WTC11 (cell line): ENCODE measurements at regions of chr19 and their contacts with region 1.

Region 1: DNA sequence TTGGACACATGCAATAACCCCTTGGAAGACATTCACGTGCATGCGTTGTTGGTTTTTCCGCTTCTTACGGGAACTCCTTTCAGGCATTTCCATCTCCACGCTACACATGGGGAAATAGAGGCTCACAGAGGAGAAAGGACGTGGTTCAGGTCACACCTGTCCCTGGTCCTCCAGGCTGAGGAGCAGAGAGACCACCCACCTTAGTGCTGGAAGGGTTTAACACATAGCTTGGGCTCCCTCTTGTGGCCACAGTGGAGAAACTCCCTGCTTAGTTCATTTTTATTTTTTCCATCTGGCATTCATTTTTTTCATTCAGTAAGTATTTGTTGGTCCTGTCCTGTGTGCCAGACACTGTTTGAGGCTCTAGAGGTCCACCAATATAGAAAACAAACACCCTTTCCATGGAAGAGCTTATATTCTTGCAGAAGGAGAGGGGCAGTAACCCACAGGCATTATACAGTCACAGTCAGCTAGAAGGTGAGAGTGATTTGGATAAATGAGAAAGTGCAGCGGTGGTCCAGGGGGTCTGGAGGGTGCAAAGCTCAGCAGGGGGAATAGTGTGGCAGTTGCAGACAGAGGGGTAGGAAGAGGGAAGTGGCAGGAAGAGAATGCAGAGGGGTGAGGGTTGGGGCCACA is 24.2 kb upstream of the TTYH1 start:
- DNase-seq: peak; percentile 77
- ATAC-seq: peak; percentile 67
- H3K4me3 Mint-ChIP-seq: no peak overlapping the region
- H3K27ac Mint-ChIP-seq: peak overlapping the region; percentile 21; the same call in 1 of the 2 replicates
- H3K4me1 Mint-ChIP-seq: peaks cover 26% of the 10 kb centered on the region
- H3K27me3 Mint-ChIP-seq: peaks cover 43% of the 10 kb centered on the region
- CTCF ChIP-seq: peak; percentile 73

Region 2: DNA sequence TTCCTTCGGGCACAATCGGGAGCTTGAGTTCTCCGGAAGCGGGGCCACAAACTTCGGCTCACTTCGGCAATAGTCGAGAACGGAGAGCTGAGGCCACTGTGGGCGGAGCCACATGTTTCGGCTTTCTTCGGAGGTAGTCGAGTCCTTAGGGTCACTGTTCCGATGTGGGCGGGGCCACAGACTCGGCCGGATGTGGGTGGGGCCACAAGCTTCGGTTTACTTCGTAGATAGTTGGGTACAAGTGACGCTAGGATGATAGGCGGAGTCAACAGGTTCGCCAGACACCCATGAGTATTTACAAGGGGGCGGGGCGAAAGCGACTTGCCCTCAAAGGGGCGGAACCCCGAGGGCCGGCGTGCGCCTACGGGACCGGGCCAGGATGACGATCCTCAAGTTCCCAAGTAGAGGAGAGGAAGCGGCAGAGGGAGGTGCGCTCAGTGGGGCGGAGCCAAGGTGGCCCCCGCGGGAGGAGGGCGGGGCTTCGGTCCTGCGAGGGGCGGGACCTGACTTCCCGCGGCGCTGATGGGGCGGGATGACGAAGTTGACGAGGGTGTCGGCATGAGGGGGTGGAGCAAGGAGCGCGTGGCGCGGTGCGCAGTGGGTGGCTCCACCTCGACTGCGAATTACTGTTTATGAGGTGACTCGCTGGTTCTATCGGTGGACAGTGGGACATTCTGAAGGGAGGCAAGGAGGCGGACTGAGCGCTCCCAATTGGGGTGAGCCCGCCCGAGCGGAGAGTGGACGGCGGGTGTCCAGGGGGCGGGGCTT is 201.1 kb before region 1 on chr19:
- CTCF ChIA-PET with region 1: interaction called, 12 read pairs
- POLR2A ChIA-PET with region 1: no interaction called
- DNase-seq: peak; percentile 100
- ATAC-seq: peak; percentile 71
- H3K4me3 Mint-ChIP-seq: peak overlapping the region; percentile 85
- H3K27ac Mint-ChIP-seq: peak overlapping the region; percentile 100
- H3K4me1 Mint-ChIP-seq: peaks cover 35% of the 10 kb centered on the region
- H3K27me3 Mint-ChIP-seq: peaks cover 3% of the 10 kb centered on the region; the same call in 1 of the 2 replicates
- CTCF ChIP-seq: no peak

Region 3: DNA sequence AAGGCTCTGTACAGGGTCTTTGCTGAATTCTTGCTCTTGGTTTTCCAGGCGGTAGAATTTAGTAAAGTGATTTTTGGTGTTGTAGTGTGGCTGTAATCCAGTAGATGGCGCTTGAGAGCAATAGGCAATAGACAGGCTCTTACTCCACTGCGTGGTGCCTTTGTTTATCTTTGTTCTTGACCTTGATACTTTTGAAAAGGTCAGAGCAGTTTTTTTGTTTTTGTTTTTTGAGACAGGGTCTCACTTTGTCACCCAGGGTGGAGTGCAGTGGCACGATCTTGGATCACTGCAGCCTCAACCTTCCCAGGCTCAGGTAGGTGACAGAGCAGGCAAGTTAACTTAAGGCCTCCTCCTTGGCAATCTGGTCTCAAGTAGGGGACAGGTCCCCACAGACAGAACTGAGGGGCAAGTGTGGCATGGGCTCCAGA is 65.9 kb before region 1 on chr19:
- CTCF ChIA-PET with region 1: interaction called, 29 read pairs
- POLR2A ChIA-PET with region 1: no interaction called
- DNase-seq: peak; percentile 46
- ATAC-seq: peak; percentile 72
- H3K4me3 Mint-ChIP-seq: no peak overlapping the region
- H3K27ac Mint-ChIP-seq: no peak overlapping the region; the same call in 1 of the 2 replicates
- H3K4me1 Mint-ChIP-seq: peaks cover 24% of the 10 kb centered on the region
- H3K27me3 Mint-ChIP-seq: peaks cover 54% of the 10 kb centered on the region
- CTCF ChIP-seq: peak; percentile 75

Region 4: GRCh38 chr19:54418030-54418929 is 27.2 kb after region 1 on chr19:
- CTCF ChIA-PET with region 1: interaction called, 66 read pairs
- POLR2A ChIA-PET with region 1: interaction called, 4 read pairs
- DNase-seq: no peak
- ATAC-seq: no peak
- H3K4me3 Mint-ChIP-seq: peak overlapping the region; percentile 51
- H3K27ac Mint-ChIP-seq: peak overlapping the region; percentile 43
- H3K4me1 Mint-ChIP-seq: peaks cover 45% of the 10 kb centered on the region
- H3K27me3 Mint-ChIP-seq: peaks cover 33% of the 10 kb centered on the region
- CTCF ChIP-seq: no peak

Region 5: GRCh38 chr19:54439174-54439853 is 48.3 kb after region 1 on chr19:
- CTCF ChIA-PET with region 1: interaction called, 53 read pairs
- POLR2A ChIA-PET with region 1: no interaction called
- DNase-seq: peak; percentile 79
- ATAC-seq: peak; percentile 85
- H3K4me3 Mint-ChIP-seq: no peak overlapping the region
- H3K27ac Mint-ChIP-seq: peak overlapping the region; percentile 49; the same call in 1 of the 2 replicates
- H3K4me1 Mint-ChIP-seq: peaks cover 27% of the 10 kb centered on the region
- H3K27me3 Mint-ChIP-seq: peaks cover 7% of the 10 kb centered on the region
- CTCF ChIP-seq: no peak

Region 6: DNA sequence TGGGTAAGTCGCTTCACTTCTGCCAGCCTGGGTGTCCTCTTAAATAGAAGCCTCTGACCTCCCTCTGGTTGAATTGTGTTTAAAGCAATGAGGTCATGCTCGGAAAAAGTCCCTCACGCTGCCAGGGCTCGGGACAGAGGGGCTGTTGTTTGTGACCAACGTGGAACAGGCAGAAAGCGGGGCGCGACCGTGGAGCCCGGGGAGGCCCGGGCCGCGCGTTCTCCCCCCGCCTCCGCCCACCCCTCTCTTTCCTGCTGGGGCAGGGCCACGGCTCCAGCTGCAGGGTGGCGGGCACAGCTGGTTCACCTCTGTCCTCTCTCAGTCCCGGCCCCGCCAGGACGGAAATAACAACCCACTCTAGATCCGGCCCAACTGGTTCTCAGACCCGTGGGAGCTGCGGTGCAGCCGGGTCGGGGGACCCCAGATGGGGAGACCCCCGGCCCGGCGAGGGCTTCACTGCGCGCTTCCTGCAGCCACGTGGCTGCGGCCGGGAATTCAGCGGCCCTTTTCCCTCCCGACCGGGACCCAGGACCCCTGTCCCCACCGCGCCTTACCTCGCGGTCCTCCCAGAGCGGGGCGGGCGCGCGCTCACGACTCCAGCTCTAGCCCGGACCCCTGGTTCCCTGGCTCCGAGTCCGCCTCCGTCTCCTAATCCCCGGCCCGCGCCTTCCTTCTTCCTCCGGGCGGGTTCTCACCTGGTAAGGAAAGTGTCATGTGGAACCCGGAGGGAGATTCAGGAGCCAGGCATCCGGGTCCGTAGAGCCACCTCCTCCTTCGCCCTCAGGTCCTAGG is 80.1 kb after region 1 on chr19:
- CTCF ChIA-PET with region 1: no interaction called
- POLR2A ChIA-PET with region 1: no interaction called
- DNase-seq: peak; percentile 55
- ATAC-seq: peak; percentile 39
- H3K4me3 Mint-ChIP-seq: peak overlapping the region; percentile 63
- H3K27ac Mint-ChIP-seq: no peak overlapping the region
- H3K4me1 Mint-ChIP-seq: peaks cover 26% of the 10 kb centered on the region
- H3K27me3 Mint-ChIP-seq: peaks cover 54% of the 10 kb centered on the region
- CTCF ChIP-seq: no peak